Naive thymus-derived CD4-positive, alpha-beta T cell (primary cell): ENCODE measurements at regions of chr15 and their contacts with region 1.

Region 1: GRCh38 chr15:55196458-55197361 is at the start of gene RSL24D1:
- DNase-seq: peak; percentile 83 to 98 (median 95)
- ATAC-seq: peak; percentile 98
- H3K4me3 ChIP-seq: peak within 1 kb of the TSS; percentile 93
- H3K4me3 Mint-ChIP-seq: no peak within 1 kb of the TSS
- H3K27ac ChIP-seq: peak within 1 kb of the TSS; percentile 89
- H3K27ac Mint-ChIP-seq: no peak within 1 kb of the TSS
- H3K4me1 ChIP-seq: peaks cover 29 to 39% of the 10 kb centered on the region in 2 donors
- H3K4me1 Mint-ChIP-seq: peaks cover 0 to 24% (median 21%) of the 10 kb centered on the region in 7 donors
- H3K27me3 ChIP-seq: no peaks in the 10 kb centered on the region
- H3K27me3 Mint-ChIP-seq: no peaks in the 10 kb centered on the region
- total RNA-seq, gene RSL24D1: 75.9 to 128 (median 110) TPM

Region 2: DNA sequence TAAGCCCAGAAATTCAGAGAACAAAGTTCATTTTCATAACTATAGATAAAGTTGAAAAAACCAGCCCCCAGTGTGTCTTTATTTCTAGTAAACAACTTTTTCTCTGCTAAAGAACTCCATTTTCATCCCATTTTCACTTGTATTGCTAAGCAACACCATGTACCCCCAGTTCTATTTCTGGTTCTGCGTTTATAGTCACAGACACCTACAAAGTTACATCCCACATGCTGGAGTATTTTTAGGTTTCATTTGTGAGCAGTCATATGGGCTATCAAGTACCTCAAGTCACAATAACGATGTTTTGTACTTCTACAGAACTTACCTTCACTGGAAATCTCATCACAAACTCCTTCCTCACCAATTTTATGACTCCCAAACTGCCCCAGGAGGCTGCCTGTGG is 236.4 kb before region 1 on chr15:
- CTCF ChIA-PET with region 1: no interaction called
- POLR2A ChIA-PET with region 1: no interaction called
- intact Hi-C with region 1: no loop called
- DNase-seq: no peak
- ATAC-seq: no peak
- H3K4me3 ChIP-seq: no peak overlapping the region
- H3K4me3 Mint-ChIP-seq: no peak overlapping the region
- H3K27ac ChIP-seq: no peak overlapping the region
- H3K27ac Mint-ChIP-seq: no peak overlapping the region
- H3K4me1 ChIP-seq: no peaks in the 10 kb centered on the region
- H3K4me1 Mint-ChIP-seq: no peaks in the 10 kb centered on the region
- H3K27me3 ChIP-seq: no peaks in the 10 kb centered on the region
- H3K27me3 Mint-ChIP-seq: peaks cover 0 to 13% (median 8%) of the 10 kb centered on the region in 5 donors

Region 3: GRCh38 chr15:55168329-55168974 is 28.3 kb before region 1 on chr15:
- CTCF ChIA-PET with region 1: no interaction called
- POLR2A ChIA-PET with region 1: interaction called, 3 read pairs
- intact Hi-C with region 1: loop called in 1 of 2 experiments (anchors 1 kb)
- DNase-seq: peak in 7 of 9 donors; percentile 12 to 43 (median 29)
- ATAC-seq: peak; percentile 77
- H3K4me3 ChIP-seq: no peak overlapping the region
- H3K4me3 Mint-ChIP-seq: no peak overlapping the region
- H3K27ac ChIP-seq: no peak overlapping the region
- H3K27ac Mint-ChIP-seq: no peak overlapping the region
- H3K4me1 ChIP-seq: no peaks in the 10 kb centered on the region
- H3K4me1 Mint-ChIP-seq: peaks cover 0 to 3% (median 0%) of the 10 kb centered on the region in 7 donors
- H3K27me3 ChIP-seq: no peaks in the 10 kb centered on the region
- H3K27me3 Mint-ChIP-seq: no peaks in the 10 kb centered on the region

Region 4: DNA sequence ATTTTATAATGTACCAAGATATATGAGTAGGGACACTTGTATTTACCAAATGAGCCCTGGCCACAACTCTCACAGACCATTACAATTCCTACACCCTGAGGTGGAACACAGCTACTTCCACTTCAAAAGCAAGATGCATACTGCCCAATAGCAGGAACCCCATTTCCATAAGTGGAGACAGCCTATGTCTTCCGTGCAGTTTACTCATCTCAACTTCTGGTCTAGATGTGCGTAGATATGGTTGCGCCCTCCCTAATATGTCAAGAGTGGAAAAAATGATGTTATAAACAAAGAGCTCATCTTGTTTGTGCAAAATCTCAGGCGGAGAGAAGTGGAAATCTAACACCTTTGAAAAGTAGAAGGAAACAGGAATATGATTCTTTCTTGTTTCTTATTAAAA is 48.3 kb after region 1 on chr15:
- CTCF ChIA-PET with region 1: no interaction called
- POLR2A ChIA-PET with region 1: no interaction called
- intact Hi-C with region 1: no loop called
- DNase-seq: no peak
- ATAC-seq: no peak
- H3K4me3 ChIP-seq: no peak overlapping the region
- H3K4me3 Mint-ChIP-seq: no peak overlapping the region
- H3K27ac ChIP-seq: no peak overlapping the region
- H3K27ac Mint-ChIP-seq: no peak overlapping the region
- H3K4me1 ChIP-seq: peaks cover 10 to 42% of the 10 kb centered on the region in 2 donors
- H3K4me1 Mint-ChIP-seq: peaks cover 13 to 53% (median 29%) of the 10 kb centered on the region in 7 donors
- H3K27me3 ChIP-seq: no peaks in the 10 kb centered on the region
- H3K27me3 Mint-ChIP-seq: no peaks in the 10 kb centered on the region

Region 5: GRCh38 chr15:55267401-55268175 is 70.9 kb after region 1 on chr15:
- CTCF ChIA-PET with region 1: no interaction called
- POLR2A ChIA-PET with region 1: interaction called, 13 read pairs
- intact Hi-C with region 1: loop called in 1 of 2 experiments (anchors 1 kb)
- DNase-seq: peak; percentile 42 to 75 (median 68)
- ATAC-seq: peak; percentile 96
- H3K4me3 ChIP-seq: peak overlapping the region; percentile 52
- H3K4me3 Mint-ChIP-seq: peak overlapping the region; percentile 71 to 85 (median 79)
- H3K27ac ChIP-seq: peak overlapping the region; percentile 70
- H3K27ac Mint-ChIP-seq: peak overlapping the region; percentile 85 to 97 (median 92)
- H3K4me1 ChIP-seq: peaks cover 19 to 71% of the 10 kb centered on the region in 2 donors
- H3K4me1 Mint-ChIP-seq: peaks cover 33 to 58% (median 45%) of the 10 kb centered on the region in 7 donors
- H3K27me3 ChIP-seq: no peaks in the 10 kb centered on the region
- H3K27me3 Mint-ChIP-seq: no peaks in the 10 kb centered on the region

Region 6: DNA sequence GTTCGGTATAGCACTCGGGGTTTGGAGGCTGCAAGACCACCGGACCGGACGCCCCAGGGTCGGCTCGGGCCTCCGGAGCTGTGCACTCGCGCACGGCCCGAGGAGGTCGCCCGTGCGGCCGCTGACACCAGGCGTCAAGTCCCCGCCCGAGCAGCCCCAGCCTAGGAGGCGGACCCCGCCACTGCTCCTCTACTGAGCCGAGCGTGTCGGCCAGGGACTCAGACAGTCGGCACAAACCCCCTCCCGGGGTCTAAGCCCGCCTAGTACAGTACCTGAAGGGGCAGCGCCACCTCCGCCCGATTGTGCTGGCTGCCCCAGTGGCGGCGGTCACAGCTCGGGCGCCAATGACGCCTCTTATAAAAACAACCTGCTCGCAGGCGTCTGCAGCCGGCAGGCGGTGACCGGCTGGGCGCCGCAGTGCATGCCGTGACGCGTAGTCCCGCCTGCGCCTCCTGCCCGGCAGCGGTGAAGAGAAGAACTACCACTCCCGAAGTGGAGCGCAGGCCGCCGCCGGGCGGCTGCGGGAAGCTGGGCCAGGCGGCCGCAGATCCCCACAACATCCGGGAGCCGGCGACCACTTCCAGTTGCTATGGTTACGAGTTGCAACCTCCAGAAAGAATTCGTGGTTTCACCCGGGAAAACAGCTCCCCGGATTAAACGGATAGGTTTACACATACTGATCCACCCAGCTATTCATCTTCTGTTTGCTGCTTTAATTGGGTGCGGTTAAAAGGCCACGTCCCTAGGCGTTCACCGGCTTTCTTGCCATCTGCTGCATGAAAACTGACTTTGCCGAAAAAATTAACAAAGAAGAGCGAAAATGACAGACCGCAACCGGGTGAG is 211.5 kb after region 1 on chr15 and contains the starts of genes CCPG1 and PIERCE2:
- CTCF ChIA-PET with region 1: no interaction called
- POLR2A ChIA-PET with region 1: interaction called, 18 read pairs
- intact Hi-C with region 1: loop called (anchors 1 kb)
- DNase-seq: peak; percentile 80 to 89 (median 85)
- ATAC-seq: peak; percentile 95
- H3K4me3 ChIP-seq: peak within 1 kb of the TSS; percentile 70
- H3K4me3 Mint-ChIP-seq: peak within 1 kb of the TSS; percentile 88 to 97 (median 94)
- H3K27ac ChIP-seq: peak within 1 kb of the TSS; percentile 86
- H3K27ac Mint-ChIP-seq: peak within 1 kb of the TSS; percentile 82 to 97 (median 89)
- H3K4me1 ChIP-seq: peaks cover 12 to 20% of the 10 kb centered on the region in 2 donors
- H3K4me1 Mint-ChIP-seq: peaks cover 18 to 52% (median 37%) of the 10 kb centered on the region in 7 donors
- H3K27me3 ChIP-seq: no peaks in the 10 kb centered on the region
- H3K27me3 Mint-ChIP-seq: peaks cover 0 to 2% (median 0%) of the 10 kb centered on the region in 5 donors
- total RNA-seq, gene CCPG1: 17.9 to 40.9 (median 28.4) TPM
- total RNA-seq, gene PIERCE2: 0.42 TPM in 1 of 5 experiments, not detected in the others

Region 7: DNA sequence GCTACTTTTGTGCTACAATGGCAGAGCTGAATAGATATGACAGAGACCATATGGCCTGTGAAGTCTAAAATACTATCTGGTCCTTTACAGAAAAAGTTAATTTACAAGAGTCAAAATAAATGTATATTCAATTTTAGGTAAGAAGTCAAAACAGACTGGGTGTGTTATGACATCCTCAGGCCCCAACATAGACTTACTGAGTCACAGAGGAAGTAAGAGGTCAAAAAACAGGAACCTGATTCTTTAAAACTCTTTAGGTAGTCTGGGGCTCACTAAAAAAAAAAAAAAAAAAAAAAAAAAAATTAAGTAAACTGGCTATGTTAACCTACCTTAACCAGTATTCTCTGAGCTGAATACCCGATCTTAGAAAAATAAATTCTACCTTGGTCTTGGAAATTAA is 298.2 kb after region 1 on chr15:
- CTCF ChIA-PET with region 1: no interaction called
- POLR2A ChIA-PET with region 1: no interaction called
- intact Hi-C with region 1: loop called in 1 of 2 experiments (anchors 2 kb)
- DNase-seq: no peak
- ATAC-seq: peak; percentile 55
- H3K4me3 ChIP-seq: no peak overlapping the region
- H3K4me3 Mint-ChIP-seq: peak overlapping the region in 1 of 10 donors; percentile 53
- H3K27ac ChIP-seq: no peak overlapping the region
- H3K27ac Mint-ChIP-seq: peak overlapping the region in 3 of 9 donors; percentile 46 to 81 (median 59)
- H3K4me1 ChIP-seq: no peaks in the 10 kb centered on the region
- H3K4me1 Mint-ChIP-seq: peaks cover 0 to 17% (median 8%) of the 10 kb centered on the region in 7 donors
- H3K27me3 ChIP-seq: no peaks in the 10 kb centered on the region
- H3K27me3 Mint-ChIP-seq: no peaks in the 10 kb centered on the region